Caco-2 (cell line): ENCODE measurements at regions of chr13 and their contacts with region 1.

Region 1: DNA sequence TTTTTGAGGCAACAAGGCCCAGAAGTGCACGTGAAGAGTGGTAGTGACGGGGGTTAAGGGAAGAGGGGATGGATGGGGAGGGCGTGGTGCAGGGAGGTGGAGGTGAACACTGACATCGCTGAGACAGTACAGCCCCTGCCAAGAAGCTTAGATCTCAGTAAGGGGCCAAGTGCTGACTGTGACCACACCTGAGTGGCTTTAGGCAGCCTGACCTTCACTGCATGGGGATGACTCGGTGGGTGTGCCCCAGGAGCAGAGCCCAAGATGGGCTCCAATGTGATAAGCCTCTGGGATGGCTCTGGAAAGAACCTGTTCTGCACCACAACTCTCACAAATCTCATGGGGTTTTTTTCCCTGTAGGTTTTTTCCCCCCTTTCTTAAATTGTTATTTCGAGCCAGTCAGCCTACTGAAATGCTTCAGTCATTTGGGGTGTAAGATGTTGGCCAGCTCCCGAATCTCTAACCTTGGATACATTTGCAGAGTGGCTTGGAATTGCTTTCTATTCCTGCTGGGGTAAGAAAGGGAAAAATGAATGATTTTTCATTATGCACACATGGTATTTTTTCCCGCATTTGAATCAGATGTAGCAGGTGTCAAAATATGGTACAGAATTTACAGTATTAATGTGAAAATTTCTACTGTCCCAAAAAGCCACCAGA is 165.0 kb downstream of the TM9SF2 start:
- DNase-seq: no peak
- H3K4me3 ChIP-seq: no peak overlapping the region
- H3K4me3 Mint-ChIP-seq: no peak overlapping the region
- H3K27ac Mint-ChIP-seq: no peak overlapping the region
- H3K4me1 ChIP-seq: peaks cover 6% of the 10 kb centered on the region; the same call in 1 of the 2 replicates
- H3K4me1 Mint-ChIP-seq: peaks cover 4% of the 10 kb centered on the region
- H3K27me3 ChIP-seq: no peaks in the 10 kb centered on the region
- H3K27me3 Mint-ChIP-seq: peaks cover 4% of the 10 kb centered on the region
- CTCF ChIP-seq: no peak

Region 2: GRCh38 chr13:99646866-99647595 is 19.2 kb before region 1 on chr13:
- CTCF ChIA-PET with region 1: no interaction called
- POLR2A ChIA-PET with region 1: interaction called, 12 read pairs
- intact Hi-C with region 1: no loop called
- DNase-seq: no peak
- H3K4me3 ChIP-seq: no peak overlapping the region
- H3K4me3 Mint-ChIP-seq: no peak overlapping the region
- H3K27ac Mint-ChIP-seq: no peak overlapping the region
- H3K4me1 ChIP-seq: no peaks in the 10 kb centered on the region
- H3K4me1 Mint-ChIP-seq: no peaks in the 10 kb centered on the region
- H3K27me3 ChIP-seq: no peaks in the 10 kb centered on the region
- H3K27me3 Mint-ChIP-seq: no peaks in the 10 kb centered on the region
- CTCF ChIP-seq: no peak